Heart left ventricle (tissue), 16 donors: ENCODE measurements at regions of chr13 and their contacts with region 1.

Region 1: DNA sequence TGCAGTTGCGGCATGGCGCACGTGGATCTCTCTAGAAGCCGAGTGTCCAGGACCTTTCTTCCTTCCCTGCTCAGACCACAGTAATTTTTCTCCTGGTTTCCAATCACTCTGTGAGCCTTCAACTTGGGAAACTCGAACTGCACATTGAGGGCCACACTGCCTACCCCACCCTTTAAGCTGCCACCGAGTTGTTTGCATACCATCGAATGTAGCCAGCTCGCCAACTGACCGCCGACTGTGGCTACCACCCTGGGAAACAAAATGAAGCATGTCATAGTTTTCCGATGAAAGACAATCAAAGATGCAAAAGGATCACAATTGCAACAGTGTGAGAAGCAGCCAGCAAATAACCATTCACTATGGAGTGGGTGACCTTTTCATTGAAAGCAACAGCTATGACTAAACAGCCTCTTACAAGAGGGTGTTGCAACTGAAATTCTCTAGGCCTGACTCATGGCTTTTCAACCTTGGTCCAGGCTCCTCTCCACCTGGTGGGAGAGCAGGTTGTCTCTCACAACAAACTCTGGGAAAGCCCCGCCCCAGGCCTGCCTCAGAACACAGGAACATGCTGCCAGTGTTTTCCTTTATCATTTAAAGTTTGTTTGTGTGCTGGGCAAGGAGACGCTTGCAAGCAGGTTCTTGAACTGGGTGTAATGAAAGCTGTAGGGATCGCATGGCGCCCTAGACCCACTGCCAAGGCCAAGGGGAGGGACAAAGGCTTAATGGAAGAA is 141.7 kb upstream of the SERP2 start:
- DNase-seq: peak in 1 of 5 donors; percentile 72
- ATAC-seq: peak in 3 of 4 donors; percentile 46 to 96 (median 94)
- H3K4me3 ChIP-seq: no peak overlapping the region
- H3K27ac ChIP-seq: peak overlapping the region in 5 of 12 donors; percentile 11 to 47 (median 15)
- H3K4me1 ChIP-seq: peaks cover 10 to 27% (median 18%) of the 10 kb centered on the region in 12 donors
- H3K27me3 ChIP-seq: no peaks in the 10 kb centered on the region
- CTCF ChIP-seq: peak in 1 of 12 donors; percentile 11
- POLR2A ChIP-seq: no peak

Region 2: GRCh38 chr13:44197791-44198770 is 33.9 kb before region 1 on chr13:
- intact Hi-C with region 1: loop called in 5 of 10 experiments (anchors 2 to 5 kb)
- DNase-seq: no peak
- ATAC-seq: peak in 3 of 4 donors; percentile 35 to 52 (median 36)
- H3K4me3 ChIP-seq: no peak overlapping the region
- H3K27ac ChIP-seq: no peak overlapping the region
- H3K4me1 ChIP-seq: peaks cover 0 to 23% (median 3%) of the 10 kb centered on the region in 12 donors
- H3K27me3 ChIP-seq: no peaks in the 10 kb centered on the region
- CTCF ChIP-seq: no peak
- POLR2A ChIP-seq: no peak

Region 3: GRCh38 chr13:44815623-44816022 is 583.7 kb after region 1 on chr13:
- intact Hi-C with region 1: no loop called
- DNase-seq: no peak
- ATAC-seq: peak in 2 of 4 donors; percentile 34 to 70
- H3K4me3 ChIP-seq: no peak overlapping the region
- H3K27ac ChIP-seq: no peak overlapping the region
- H3K4me1 ChIP-seq: peaks cover 0 to 34% (median 0%) of the 10 kb centered on the region in 12 donors
- H3K27me3 ChIP-seq: no peaks in the 10 kb centered on the region
- CTCF ChIP-seq: no peak
- POLR2A ChIP-seq: no peak